H1 (cell line): ENCODE measurements at regions of chr10 and their contacts with region 1.

Region 1: DNA sequence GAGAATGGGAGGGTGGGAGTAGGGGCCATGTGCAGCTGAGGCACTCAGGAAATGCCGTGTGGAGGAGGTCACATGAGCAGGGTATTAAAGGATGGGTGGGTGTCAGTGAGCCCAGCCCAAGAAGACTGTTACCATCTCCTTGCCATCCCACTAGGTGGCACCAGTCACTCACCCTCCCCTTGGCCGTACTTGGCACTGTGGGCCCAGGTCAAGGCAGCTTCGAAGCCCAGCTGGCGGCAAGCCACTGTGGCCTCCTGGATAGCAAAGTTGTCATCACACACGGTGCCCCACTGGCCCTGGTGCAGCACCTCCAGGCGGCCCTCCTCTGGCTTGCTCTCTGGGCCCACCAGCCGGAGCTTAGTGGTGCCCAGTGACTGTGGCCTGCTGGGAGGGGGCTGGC is 5.4 kb downstream of the LOXL4 start:
- DNase-seq: peak in 1 of 2 experiments; percentile 34
- H3K4me3 ChIP-seq: no peak overlapping the region
- H3K27ac ChIP-seq: no peak overlapping the region
- H3K4me1 ChIP-seq: peaks cover 0 to 2% (median 0%) of the 10 kb centered on the region in 4 experiments; a peak in 1 of 7 replicates
- H3K27me3 ChIP-seq: peaks cover 0 to 4% (median 2%) of the 10 kb centered on the region in 4 experiments; a peak in 3 of 7 replicates
- CTCF ChIP-seq: peak; percentile 77 to 81 (median 80)
- EP300 ChIP-seq: no peak
- POLR2A ChIP-seq: no peak
- RAD21 ChIP-seq: peak; percentile 86 to 89

Region 2: DNA sequence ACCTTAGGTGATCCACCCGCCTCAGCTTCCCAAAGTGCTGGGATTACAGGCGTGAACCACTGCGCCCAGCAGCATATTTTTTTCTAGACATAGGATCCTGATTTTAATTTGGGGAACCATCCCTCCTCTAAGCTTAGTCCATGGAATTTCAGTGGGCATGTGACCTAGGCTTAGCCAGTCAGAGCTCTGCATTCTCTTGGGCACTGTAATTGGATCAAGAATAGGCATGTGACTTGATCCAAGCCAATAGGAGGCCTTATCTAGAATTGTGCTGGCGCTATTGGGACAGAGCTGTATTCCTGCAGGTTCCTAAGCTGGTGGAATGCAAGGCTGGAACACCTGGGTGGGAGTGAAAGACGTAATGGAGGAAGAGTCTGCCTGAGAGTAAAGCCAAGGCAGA is 195.4 kb before region 1 on chr10:
- CTCF ChIA-PET with region 1: no interaction called
- POLR2A ChIA-PET with region 1: no interaction called
- DNase-seq: no peak
- H3K4me3 ChIP-seq: no peak overlapping the region
- H3K27ac ChIP-seq: no peak overlapping the region
- H3K4me1 ChIP-seq: peaks cover 0 to 6% (median 2%) of the 10 kb centered on the region in 4 experiments; a peak in 2 of 7 replicates
- H3K27me3 ChIP-seq: no peaks in the 10 kb centered on the region
- CTCF ChIP-seq: no peak
- EP300 ChIP-seq: no peak
- POLR2A ChIP-seq: no peak
- RAD21 ChIP-seq: no peak

Region 3: GRCh38 chr10:98170249-98171117 is 92.1 kb before region 1 on chr10:
- CTCF ChIA-PET with region 1: interaction called, 12 read pairs
- POLR2A ChIA-PET with region 1: no interaction called
- DNase-seq: peak; percentile 46 to 66
- H3K4me3 ChIP-seq: no peak overlapping the region
- H3K27ac ChIP-seq: no peak overlapping the region
- H3K4me1 ChIP-seq: peaks cover 6 to 14% (median 12%) of the 10 kb centered on the region in 4 experiments
- H3K27me3 ChIP-seq: no peaks in the 10 kb centered on the region
- CTCF ChIP-seq: peak in 2 of 3 experiments; percentile 61 to 82; a peak in 3 of 4 replicates
- EP300 ChIP-seq: no peak
- POLR2A ChIP-seq: no peak
- RAD21 ChIP-seq: peak; percentile 66 to 75

Region 4: DNA sequence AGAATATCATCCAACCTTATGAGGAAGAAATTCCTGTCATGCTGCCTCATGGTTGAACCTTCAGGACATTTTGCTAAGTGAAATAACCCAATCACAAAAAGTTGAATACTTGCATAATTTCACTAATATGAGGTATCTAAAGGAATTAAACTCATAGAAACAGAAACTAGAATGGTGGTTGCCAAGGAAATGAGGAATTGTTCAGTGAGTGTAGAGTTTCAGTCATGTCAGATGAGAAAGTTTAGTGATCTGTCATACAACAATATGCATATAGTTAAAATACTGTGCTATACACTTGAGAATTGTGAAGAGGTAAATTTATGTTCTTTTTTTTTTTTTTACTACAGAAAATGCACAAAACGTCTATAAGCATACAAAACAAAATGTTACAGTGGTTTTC is 67.5 kb before region 1 on chr10:
- CTCF ChIA-PET with region 1: no interaction called
- POLR2A ChIA-PET with region 1: no interaction called
- DNase-seq: no peak
- H3K4me3 ChIP-seq: no peak overlapping the region
- H3K27ac ChIP-seq: no peak overlapping the region
- H3K4me1 ChIP-seq: no peaks in the 10 kb centered on the region
- H3K27me3 ChIP-seq: no peaks in the 10 kb centered on the region
- CTCF ChIP-seq: no peak
- EP300 ChIP-seq: no peak
- POLR2A ChIP-seq: no peak
- RAD21 ChIP-seq: no peak

Region 5: GRCh38 chr10:98242823-98243222 is 19.7 kb before region 1 on chr10:
- CTCF ChIA-PET with region 1: interaction called, 12 read pairs
- POLR2A ChIA-PET with region 1: no interaction called
- DNase-seq: no peak
- H3K4me3 ChIP-seq: no peak overlapping the region
- H3K27ac ChIP-seq: no peak overlapping the region
- H3K4me1 ChIP-seq: no peaks in the 10 kb centered on the region
- H3K27me3 ChIP-seq: no peaks in the 10 kb centered on the region
- CTCF ChIP-seq: peak in 2 of 3 experiments; percentile 30 to 50; a peak in 2 of 4 replicates
- EP300 ChIP-seq: no peak
- POLR2A ChIP-seq: no peak
- RAD21 ChIP-seq: peak; percentile 65 to 69

Region 6: DNA sequence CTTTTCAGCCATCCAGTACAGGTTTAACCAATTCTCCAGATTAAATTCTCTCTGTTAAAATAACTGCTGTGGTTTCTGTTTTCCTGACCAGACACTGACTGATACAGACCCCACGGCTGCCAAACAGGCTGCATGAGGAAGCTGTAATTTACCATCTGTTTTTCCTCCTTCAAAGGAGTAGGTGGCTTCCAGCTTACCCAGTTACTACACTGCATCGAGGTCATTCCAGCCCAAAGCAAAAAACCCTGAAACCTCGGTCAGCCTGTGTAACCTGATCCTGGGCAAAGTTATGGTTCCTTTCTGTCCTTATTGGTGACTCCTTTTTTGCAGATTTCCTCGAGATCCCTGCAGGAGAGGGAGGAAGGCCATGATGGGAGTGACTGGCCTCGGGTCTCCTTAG is 33.3 kb after region 1 on chr10:
- CTCF ChIA-PET with region 1: interaction called, 16 read pairs
- POLR2A ChIA-PET with region 1: no interaction called
- DNase-seq: no peak
- H3K4me3 ChIP-seq: no peak overlapping the region
- H3K27ac ChIP-seq: no peak overlapping the region
- H3K4me1 ChIP-seq: peaks cover 0 to 12% (median 3%) of the 10 kb centered on the region in 4 experiments; a peak in 5 of 7 replicates
- H3K27me3 ChIP-seq: no peaks in the 10 kb centered on the region
- CTCF ChIP-seq: no peak
- EP300 ChIP-seq: no peak
- POLR2A ChIP-seq: no peak
- RAD21 ChIP-seq: no peak

Region 7: GRCh38 chr10:98316661-98317060 is 54.1 kb after region 1 on chr10:
- CTCF ChIA-PET with region 1: interaction called, 20 read pairs
- POLR2A ChIA-PET with region 1: no interaction called
- DNase-seq: no peak
- H3K4me3 ChIP-seq: no peak overlapping the region
- H3K27ac ChIP-seq: no peak overlapping the region
- H3K4me1 ChIP-seq: peaks cover 0 to 3% (median 0%) of the 10 kb centered on the region in 4 experiments; a peak in 3 of 7 replicates
- H3K27me3 ChIP-seq: no peaks in the 10 kb centered on the region
- CTCF ChIP-seq: no peak
- EP300 ChIP-seq: no peak
- POLR2A ChIP-seq: no peak
- RAD21 ChIP-seq: no peak

Region 8: DNA sequence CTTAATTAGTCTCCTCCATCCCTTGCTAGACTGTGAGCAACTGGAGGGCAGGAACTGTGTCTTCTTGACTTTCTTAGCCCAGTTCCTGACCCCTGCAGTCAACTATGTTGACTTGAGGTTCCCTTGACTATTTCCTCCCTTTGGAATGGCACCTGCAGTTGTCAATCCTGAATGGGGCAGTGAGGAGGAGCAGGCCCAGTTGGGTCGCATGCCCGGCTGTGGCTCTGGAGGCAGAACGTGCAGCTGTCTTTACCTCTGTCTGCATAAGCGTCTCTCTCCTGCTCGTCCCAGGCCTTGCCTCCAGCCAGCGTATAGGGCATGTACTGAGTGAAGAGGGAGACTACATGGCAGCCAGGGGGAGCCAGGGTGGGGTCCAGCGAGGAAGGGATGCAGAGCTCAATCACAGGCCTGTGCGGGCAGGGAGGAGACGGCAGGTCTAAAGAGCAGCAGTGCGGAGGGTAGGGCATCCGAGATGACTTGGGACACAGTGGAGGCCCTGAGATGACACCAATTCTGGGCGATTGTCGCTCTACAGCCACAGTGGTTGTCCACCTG is 125.6 kb after region 1 on chr10:
- CTCF ChIA-PET with region 1: no interaction called
- POLR2A ChIA-PET with region 1: no interaction called
- DNase-seq: peak; percentile 15 to 51
- H3K4me3 ChIP-seq: no peak overlapping the region
- H3K27ac ChIP-seq: no peak overlapping the region
- H3K4me1 ChIP-seq: no peaks in the 10 kb centered on the region
- H3K27me3 ChIP-seq: no peaks in the 10 kb centered on the region
- CTCF ChIP-seq: peak; percentile 23 to 50 (median 40); a peak in 3 of 4 replicates
- EP300 ChIP-seq: no peak
- POLR2A ChIP-seq: no peak
- RAD21 ChIP-seq: peak; percentile 15 to 31; a peak in 3 of 4 replicates